Dorsolateral prefrontal cortex (tissue), 120 donors: ENCODE measurements at regions of chr17 and their contacts with region 1.

Region 1: DNA sequence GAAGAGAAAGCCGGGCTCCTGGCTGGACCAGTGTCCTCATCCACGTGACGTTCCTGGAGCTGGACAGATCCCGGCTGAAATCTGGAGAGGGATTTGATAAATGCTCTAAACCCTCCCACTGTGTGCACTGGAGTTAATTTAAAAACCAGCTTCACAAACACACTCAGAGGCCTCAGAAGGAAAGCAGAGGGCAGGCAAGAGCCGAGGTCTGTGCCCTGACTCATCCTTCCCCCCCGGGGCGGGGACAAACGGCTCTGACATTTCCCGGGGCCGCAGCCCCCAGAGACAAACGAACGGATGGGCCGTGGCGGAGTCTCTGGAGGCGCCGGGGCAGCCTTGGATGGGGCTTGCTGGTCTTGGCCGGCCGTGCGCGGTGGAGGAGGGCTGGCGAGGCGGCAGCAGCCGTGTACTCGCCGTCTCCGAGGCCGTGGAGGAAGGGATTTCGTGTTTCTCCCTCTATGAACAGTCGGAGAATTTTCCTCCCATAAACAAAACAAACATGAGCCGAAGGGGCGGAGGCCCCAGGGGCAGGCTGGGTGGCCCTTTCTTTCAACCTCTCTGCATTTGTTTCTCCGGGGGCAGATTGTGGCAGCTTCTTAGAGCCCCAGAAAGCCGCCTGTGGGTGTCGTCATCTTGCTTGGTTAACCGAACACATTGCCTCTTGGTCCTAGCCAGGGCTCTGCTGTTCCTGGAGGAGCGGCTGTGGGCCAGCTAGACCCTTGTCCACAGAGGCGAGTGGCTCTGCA is 94.3 kb downstream of the NTN1 start:
- DNase-seq: peak in 4 of 10 donors; percentile 20 to 54 (median 28)
- H3K4me3 ChIP-seq: peak overlapping the region in 58 of 59 donors; percentile 2 to 71 (median 44)
- H3K27ac ChIP-seq: peak overlapping the region in 23 of 59 donors; percentile 2 to 78 (median 49)
- H3K27me3 ChIP-seq: peaks cover 0 to 46% (median 0%) of the 10 kb centered on the region in 45 donors
- CTCF ChIP-seq: peak in 47 of 56 donors; percentile 9 to 68 (median 40)

Region 2: DNA sequence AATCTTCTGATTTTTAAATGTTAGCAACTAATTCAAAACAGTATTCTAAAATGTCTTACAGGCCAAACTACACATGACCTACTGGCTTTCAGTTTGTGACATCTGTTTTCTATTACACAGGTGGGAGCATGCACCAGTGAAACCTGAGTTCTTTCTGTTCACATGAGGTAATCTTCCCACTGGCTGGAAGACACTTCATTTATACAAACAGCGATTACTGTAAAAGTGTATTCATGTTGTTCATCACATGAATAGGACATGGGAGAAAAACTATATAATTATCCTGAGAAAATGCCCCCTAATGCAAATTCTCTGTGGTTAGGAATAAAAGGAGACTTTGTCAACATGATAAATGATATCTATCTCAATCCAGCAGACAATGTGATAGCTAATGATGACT is 139.0 kb before region 1 on chr17:
- intact Hi-C with region 1: no loop called
- DNase-seq: no peak
- H3K4me3 ChIP-seq: no peak overlapping the region
- H3K27ac ChIP-seq: no peak overlapping the region
- H3K27me3 ChIP-seq: peaks cover 0 to 6% (median 0%) of the 10 kb centered on the region in 45 donors
- CTCF ChIP-seq: no peak

Region 3: DNA sequence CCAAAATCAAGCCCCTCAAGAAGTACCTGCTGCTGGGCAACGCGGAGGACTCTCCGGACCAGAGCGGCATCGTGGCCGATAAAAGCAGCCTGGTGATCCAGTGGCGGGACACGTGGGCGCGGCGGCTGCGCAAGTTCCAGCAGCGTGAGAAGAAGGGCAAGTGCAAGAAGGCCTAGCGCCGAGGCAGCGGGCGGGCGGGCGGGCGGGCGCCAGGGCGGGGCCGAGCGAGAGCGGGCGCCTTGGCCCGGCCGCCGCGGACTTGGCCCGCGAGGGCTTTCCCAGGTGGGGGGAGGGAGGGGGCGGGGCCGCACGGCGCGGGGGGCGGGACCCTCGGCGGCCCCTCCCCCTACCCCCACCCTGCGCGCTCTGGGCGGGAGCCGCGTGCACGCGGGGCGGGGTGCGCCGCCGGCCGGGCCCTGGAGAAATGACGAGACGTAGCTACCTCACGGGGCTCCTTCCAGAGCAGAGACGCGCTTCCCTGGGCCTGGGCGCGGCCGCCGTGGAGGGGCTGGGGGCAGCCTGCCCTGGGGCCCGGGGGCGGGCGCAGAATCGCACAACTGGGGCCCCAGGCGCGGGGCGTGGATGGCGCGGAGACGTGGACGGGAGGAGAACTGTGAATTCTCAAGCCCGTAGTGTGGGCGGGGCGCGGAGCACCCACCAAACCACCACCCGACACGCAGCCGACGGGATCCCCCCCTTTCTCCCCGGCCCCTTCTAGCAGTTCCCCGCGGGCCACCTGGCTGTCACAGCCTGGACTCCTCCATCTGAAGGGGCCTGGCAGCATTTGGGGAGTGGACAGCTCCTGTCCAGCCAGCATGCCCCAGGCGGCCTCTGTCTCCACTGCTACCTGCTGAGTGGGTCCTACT is 124.4 kb after region 1 on chr17:
- intact Hi-C with region 1: no loop called
- DNase-seq: peak in 9 of 10 donors; percentile 36 to 70 (median 57)
- H3K4me3 ChIP-seq: peak overlapping the region; percentile 39 to 75 (median 61)
- H3K27ac ChIP-seq: peak overlapping the region in 57 of 59 donors; percentile 51 to 95 (median 83)
- H3K27me3 ChIP-seq: no peaks in the 10 kb centered on the region
- CTCF ChIP-seq: no peak

Region 4: DNA sequence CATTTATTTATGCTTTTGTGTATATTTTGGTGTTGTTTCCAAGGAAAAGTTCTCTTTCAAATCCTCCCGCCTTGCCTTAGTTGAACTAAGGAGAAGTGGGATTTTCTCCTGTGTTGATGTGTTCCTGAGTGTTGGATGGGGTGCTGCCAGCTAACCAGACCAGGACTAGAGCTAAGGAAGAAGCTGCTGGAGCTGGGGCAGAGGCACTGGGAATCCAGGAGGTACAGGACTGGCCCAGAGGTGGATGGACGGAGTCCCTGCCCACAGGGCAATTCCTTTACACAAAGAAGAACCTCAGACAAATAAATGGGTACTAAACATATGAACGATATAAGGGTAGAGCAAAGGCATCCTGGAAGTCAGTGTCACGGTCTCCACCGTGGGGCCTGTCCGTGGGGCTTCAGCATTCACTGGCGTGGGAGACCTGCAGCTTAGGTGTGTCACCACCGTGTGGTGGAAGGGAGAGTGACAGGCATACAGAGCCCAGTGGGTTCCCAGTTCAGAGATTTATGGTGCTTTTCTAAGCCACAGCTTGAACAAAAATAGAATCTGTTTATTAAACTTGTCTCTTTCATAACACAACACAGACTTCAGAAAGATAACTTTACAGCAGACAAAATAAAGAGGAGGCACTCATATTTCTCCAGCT is 176.4 kb after region 1 on chr17:
- intact Hi-C with region 1: loop called in 1 of 2 experiments (anchors 10 kb)
- DNase-seq: peak in 6 of 10 donors; percentile 14 to 58 (median 37)
- H3K4me3 ChIP-seq: no peak overlapping the region
- H3K27ac ChIP-seq: peak overlapping the region in 21 of 59 donors; percentile 6 to 65 (median 36)
- H3K27me3 ChIP-seq: no peaks in the 10 kb centered on the region
- CTCF ChIP-seq: peak in 55 of 56 donors; percentile 37 to 79 (median 69)